ENCODE measurements at regions of chr5 and their contacts with region 1.

Region 1: DNA sequence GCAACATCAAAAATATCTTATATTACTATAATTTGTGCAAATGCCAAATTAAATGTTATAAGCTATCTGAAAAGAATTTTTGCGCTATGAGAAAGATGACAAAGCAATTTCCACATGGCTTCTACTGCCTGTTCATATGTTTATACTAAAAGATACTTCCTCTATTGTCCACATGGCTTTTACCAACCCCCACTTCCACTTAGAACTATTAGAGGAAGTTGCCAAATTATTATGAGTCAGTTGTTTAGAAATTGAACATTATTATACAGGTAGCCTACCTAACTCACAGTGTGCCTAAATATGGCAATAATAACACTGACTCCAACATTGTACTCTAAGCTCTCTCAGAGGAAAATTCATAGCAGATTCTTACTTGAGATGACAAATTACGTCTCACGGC is 37.6 kb upstream of the SLC27A6 start:
- DNase-seq: no peak

Region 2: DNA sequence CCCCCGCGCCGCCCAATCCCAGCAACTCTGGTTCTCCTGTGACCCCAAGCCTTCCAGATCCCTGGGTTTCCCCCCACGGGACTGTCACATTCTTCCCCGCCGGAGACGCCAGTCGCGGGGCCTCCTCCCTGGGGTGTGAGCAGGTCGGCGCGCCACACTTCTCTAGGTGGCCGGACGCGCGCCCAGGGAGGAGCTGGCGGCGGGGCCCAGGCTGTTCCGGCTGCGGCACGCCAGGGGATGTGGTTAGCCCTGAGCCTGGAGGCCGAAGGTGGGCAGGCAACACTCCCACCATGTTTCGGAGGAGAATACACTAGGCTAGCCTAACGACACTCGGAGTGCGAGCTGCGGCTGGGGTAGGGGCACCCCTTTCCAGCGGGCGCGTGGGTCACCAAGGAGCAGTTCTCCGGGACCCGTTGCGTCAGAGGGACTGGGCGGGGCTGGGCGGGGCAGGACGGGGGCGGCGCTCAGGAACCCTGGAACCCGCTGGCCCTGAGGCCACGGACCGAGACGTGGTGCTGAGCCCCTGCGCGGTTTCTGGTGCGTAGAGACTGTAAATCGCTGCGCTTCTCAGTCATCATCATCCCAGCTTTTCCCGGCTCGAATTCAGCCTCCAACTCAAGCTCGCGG is 37.5 kb after region 1 on chr5 and contains the start of gene SLC27A6:
- intact Hi-C with region 1: loop called (anchors 2 kb)
- DNase-seq: peak; percentile 76
- total RNA-seq, gene SLC27A6: 64.4 TPM

Measured in cardiac septum (tissue), 1 donor.